Activated CD4-positive, alpha-beta memory T cell treated with anti-CD3 and anti-CD28 coated beads, Interleukin-2, amount 10 ng/mL, durations not matched to agents 7 days and 5 days (primary cell): ENCODE measurements at regions of chr1 and their contacts with region 1.

Region 1: DNA sequence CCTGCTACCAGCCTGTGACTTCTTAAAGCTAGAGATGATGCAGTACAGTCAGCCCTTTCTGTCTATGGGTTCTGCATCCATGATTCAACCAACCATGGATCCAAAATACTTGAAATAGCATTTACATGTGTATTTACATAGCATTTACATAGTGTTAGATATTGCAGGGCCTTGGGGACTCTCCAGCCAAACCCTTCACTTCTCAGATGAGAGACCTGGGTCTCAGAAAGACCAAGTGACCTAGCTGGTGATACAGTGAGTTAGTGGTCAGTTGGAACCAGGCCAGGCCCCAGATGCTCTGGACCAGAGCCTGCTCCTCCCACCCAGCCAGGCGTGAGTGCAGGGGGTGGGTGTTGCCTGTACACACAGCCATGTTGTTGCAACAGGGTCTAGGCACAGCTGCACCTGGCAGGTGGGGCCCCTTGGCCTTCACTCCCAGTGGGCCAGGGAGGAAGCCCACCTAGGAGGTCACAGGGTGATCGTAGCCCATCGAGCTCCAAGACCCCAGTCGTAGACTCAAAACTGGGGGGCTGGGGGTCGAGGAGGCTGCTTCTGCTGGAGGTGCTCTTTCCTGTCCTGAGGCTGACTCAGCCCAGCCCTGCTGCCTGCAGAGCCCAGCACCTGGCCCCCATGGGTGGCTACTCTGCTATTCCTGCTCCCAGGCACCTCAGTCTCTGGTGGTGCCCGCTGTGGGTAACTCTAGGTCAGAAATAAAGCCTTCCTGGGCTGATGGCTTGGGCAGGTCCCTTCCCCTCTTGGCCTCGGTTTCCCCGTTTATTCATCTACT is 7.7 kb downstream of the TMEM61 start:
- DNase-seq: no peak
- H3K4me3 Mint-ChIP-seq: no peak overlapping the region
- H3K27ac Mint-ChIP-seq: no peak overlapping the region
- H3K4me1 Mint-ChIP-seq: peaks cover 4% of the 10 kb centered on the region
- H3K27me3 Mint-ChIP-seq: peaks cover 8% of the 10 kb centered on the region

Region 2: GRCh38 chr1:54950369-54951163 is 37.5 kb before region 1 on chr1:
- CTCF ChIA-PET with region 1: interaction called, 14 read pairs
- POLR2A ChIA-PET with region 1: no interaction called
- DNase-seq: peak; percentile 70
- H3K4me3 Mint-ChIP-seq: no peak overlapping the region
- H3K27ac Mint-ChIP-seq: peak overlapping the region; percentile 32
- H3K4me1 Mint-ChIP-seq: peaks cover 41% of the 10 kb centered on the region
- H3K27me3 Mint-ChIP-seq: peaks cover 7% of the 10 kb centered on the region